CD4-positive, alpha-beta T cell (primary cell): ENCODE measurements at regions of chr12 and their contacts with region 1.

Region 1: GRCh38 chr12:115916910-115917668 is 360.4 kb downstream of the MED13L start:
- DNase-seq: peak; percentile 56 to 84 (median 68)
- ATAC-seq: peak; percentile 91
- H3K4me3 ChIP-seq: no peak overlapping the region
- H3K4me3 Mint-ChIP-seq: peak overlapping the region; percentile 54
- H3K27ac ChIP-seq: no peak overlapping the region
- H3K27ac Mint-ChIP-seq: no peak overlapping the region
- H3K4me1 ChIP-seq: peaks cover 5% of the 10 kb centered on the region
- H3K4me1 Mint-ChIP-seq: no peaks in the 10 kb centered on the region
- H3K27me3 ChIP-seq: peaks cover 13 to 46% of the 10 kb centered on the region in 2 experiments
- H3K27me3 Mint-ChIP-seq: peaks cover 91% of the 10 kb centered on the region
- CTCF ChIP-seq: peak; percentile 97

Region 2: DNA sequence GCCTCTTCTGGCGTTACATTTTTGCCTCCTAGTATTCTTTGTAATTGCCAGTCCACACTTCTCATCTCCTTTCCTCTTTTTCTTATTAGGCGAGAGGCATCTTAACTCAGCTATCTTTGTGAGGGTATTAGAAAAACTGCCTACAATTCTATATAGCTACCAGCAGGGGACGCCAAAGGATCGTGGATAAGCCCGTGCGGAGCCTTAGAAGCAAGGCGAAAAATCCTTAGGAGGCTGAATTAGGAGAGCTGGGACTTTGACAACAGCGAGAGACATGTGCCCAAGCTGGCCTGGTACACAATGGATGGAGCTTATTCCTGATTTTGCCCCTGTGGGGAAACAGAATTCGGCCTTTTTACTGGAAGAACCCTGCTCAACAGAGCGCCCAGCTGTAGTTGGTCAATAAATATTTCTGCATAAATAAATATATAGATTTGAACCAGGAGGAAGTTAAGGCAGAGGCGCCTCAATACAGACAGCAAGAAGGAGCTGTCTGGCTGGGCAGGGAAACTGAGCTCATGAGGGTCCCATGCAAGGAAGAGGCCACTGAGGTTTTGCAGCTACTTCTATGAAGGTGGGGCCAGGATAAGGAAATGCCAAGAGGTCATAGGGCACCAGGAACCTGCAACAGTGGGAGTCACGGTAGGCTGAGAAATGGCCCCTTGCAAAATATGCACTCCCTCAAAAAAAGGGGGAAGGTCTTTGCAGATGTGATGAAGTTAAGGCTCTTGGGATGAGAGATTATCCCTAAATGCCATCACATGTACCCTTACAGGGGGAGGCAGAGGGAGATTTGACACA is 1936.4 kb before region 1 on chr12:
- CTCF ChIA-PET with region 1: no interaction called
- POLR2A ChIA-PET with region 1: no interaction called
- intact Hi-C with region 1: loop called in 1 of 2 experiments (anchors 1 kb)
- DNase-seq: peak in 4 of 14 experiments; percentile 30 to 72 (median 56)
- ATAC-seq: no peak
- H3K4me3 ChIP-seq: no peak overlapping the region
- H3K4me3 Mint-ChIP-seq: no peak overlapping the region
- H3K27ac ChIP-seq: no peak overlapping the region
- H3K27ac Mint-ChIP-seq: no peak overlapping the region
- H3K4me1 ChIP-seq: peaks cover 3% of the 10 kb centered on the region
- H3K4me1 Mint-ChIP-seq: no peaks in the 10 kb centered on the region
- H3K27me3 ChIP-seq: peaks cover 13% of the 10 kb centered on the region in 2 experiments
- H3K27me3 Mint-ChIP-seq: peaks cover 52% of the 10 kb centered on the region
- CTCF ChIP-seq: peak; percentile 67

Region 3: GRCh38 chr12:114662512-114663177 is 1254.4 kb before region 1 on chr12:
- CTCF ChIA-PET with region 1: interaction called, 4 read pairs
- POLR2A ChIA-PET with region 1: no interaction called
- intact Hi-C with region 1: loop called in 1 of 2 experiments (anchors 1 kb)
- DNase-seq: peak; percentile 32 to 69 (median 52)
- ATAC-seq: no peak
- H3K4me3 ChIP-seq: no peak overlapping the region
- H3K4me3 Mint-ChIP-seq: no peak overlapping the region
- H3K27ac ChIP-seq: no peak overlapping the region
- H3K27ac Mint-ChIP-seq: no peak overlapping the region
- H3K4me1 ChIP-seq: no peaks in the 10 kb centered on the region
- H3K4me1 Mint-ChIP-seq: no peaks in the 10 kb centered on the region
- H3K27me3 ChIP-seq: peaks cover 39 to 45% of the 10 kb centered on the region in 2 experiments
- H3K27me3 Mint-ChIP-seq: peaks cover 65% of the 10 kb centered on the region
- CTCF ChIP-seq: peak; percentile 83